ENCODE measurements at regions of chr5 and their contacts with region 1.

Region 1: GRCh38 chr5:37005946-37006540 is 129.5 kb downstream of the NIPBL start:
- DNase-seq: no peak
- H3K4me3 ChIP-seq: no peak overlapping the region
- CTCF ChIP-seq: peak; percentile 31

Region 2: DNA sequence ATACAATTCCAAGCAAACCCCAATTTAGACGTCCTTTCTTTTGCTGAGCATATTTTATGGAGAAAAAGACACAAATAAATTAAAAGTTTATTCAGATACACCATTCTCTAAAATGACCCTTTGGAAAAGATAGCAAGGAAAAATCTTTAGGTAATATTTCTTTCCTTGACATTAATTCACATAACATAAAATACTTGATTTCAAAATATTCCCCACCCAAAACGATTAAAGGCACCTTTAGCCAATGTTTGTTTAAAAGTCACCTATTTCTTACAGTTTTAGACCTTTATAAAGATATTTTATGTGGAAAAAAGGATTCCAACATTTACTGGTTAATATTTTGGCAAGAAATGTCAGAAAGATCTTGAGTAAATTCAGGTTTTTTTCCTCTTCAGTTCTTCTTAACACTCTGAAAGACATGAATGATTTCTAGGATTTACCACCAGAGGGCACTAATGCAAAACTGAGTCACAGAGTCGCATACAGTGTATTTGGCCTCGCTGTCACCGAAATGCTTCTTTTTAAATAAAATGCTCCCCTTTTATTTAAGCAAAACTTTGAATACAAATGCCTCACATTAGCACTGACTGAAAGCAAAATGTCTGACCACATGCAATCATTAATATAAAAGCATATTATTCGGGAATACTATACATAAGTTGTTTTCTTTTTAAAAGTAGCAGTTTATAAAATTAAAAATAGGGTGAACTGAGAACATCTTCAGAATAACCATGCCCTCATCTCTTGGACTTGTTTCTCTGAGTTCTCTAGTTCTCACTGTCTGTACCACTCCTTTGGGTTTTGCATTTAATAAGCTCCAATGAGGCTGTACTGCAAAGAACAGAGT is 277.1 kb before region 1 on chr5:
- CTCF ChIA-PET with region 1: interaction called, 158 read pairs
- POLR2A ChIA-PET with region 1: no interaction called
- DNase-seq: peak; percentile 19
- H3K4me3 ChIP-seq: no peak overlapping the region
- CTCF ChIP-seq: peak; percentile 49

Region 3: DNA sequence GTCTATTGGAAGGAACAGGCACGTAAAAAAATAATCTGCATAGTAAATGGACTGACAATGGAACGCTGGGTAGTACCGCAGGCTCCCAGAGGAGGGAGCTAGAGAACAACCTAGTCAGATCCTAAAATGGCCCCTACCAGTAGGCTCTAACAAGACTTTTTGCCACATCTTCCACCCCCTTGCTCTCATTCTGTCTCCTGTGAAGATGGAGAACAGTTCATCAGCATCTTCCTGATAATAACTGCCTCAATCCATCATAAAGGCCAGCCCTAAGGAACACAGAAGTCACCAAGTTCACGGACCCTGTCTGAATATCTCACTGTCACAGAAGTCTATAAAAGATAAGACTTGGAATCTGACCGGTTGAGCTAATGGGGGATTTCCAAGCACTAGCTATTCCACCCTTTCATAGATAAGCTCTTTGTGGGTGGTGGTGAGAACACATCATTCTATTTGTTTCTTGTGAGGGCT is 266.3 kb before region 1 on chr5:
- CTCF ChIA-PET with region 1: interaction called, 158 read pairs
- POLR2A ChIA-PET with region 1: no interaction called
- DNase-seq: no peak
- H3K4me3 ChIP-seq: no peak overlapping the region
- CTCF ChIP-seq: peak; percentile 71

Region 4: GRCh38 chr5:36744773-36745589 is 261.1 kb before region 1 on chr5:
- CTCF ChIA-PET with region 1: interaction called, 158 read pairs
- POLR2A ChIA-PET with region 1: no interaction called
- DNase-seq: no peak
- H3K4me3 ChIP-seq: peak overlapping the region; percentile 61
- CTCF ChIP-seq: no peak

Region 5: DNA sequence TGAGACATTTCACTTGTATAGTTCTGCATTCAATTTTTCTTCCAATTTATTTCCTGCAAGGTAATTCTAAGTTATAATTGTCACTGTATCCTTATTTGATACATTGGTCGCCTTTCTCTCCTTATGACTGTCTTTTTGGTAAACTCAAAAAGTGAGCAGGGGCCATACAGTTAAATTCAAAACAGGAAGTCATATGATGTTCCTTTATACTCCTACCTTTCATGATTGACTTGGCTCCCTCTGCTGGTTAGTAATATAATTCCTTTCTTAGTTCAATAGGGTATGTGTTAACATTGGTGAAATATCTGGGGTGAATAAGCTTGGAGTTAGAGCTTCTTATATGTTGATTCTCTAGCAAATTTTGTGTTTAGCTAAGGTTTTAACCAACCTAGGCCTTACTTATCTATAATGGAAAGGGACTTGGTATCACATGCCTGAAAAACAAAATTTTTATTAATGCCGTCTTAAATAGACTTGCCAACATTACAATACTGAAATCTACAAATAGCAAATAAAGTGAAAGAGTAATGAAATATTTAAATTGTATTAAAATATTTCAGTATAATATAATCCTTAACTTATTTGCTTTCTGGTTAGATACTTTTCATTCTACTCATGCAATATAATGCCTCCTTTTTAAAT is 135.5 kb before region 1 on chr5:
- CTCF ChIA-PET with region 1: interaction called, 15 read pairs
- POLR2A ChIA-PET with region 1: no interaction called
- DNase-seq: no peak
- H3K4me3 ChIP-seq: no peak overlapping the region
- CTCF ChIP-seq: peak; percentile 47

Region 6: GRCh38 chr5:36875790-36876388 is 130.2 kb before region 1 on chr5:
- CTCF ChIA-PET with region 1: interaction called, 15 read pairs
- POLR2A ChIA-PET with region 1: no interaction called
- DNase-seq: no peak
- H3K4me3 ChIP-seq: peak overlapping the region; percentile 75
- CTCF ChIP-seq: peak; percentile 64

Region 7: GRCh38 chr5:36944607-36945225 is 61.3 kb before region 1 on chr5:
- CTCF ChIA-PET with region 1: interaction called, 10 read pairs
- POLR2A ChIA-PET with region 1: no interaction called
- DNase-seq: no peak
- H3K4me3 ChIP-seq: no peak overlapping the region
- CTCF ChIP-seq: peak; percentile 12

Measured in AG04449 (cell line).